SK-N-SH (cell line): ENCODE measurements at regions of chr14 and their contacts with region 1.

Region 1: GRCh38 chr14:72516936-72517700 is 376.8 kb downstream of the DPF3 start:
- DNase-seq: peak; percentile 48
- H3K4me3 ChIP-seq: no peak overlapping the region; a peak in 1 of 4 replicates
- H3K27ac ChIP-seq: no peak overlapping the region
- H3K4me1 ChIP-seq: peaks cover 0 to 7% of the 10 kb centered on the region in 2 experiments; a peak in 1 of 4 replicates
- H3K27me3 ChIP-seq: no peaks in the 10 kb centered on the region; the same call in 1 of the 2 replicates
- CTCF ChIP-seq: peak; percentile 92
- EP300 ChIP-seq: no peak
- RAD21 ChIP-seq: peak; percentile 98

Region 2: GRCh38 chr14:72495664-72496264 is 21.4 kb before region 1 on chr14:
- CTCF ChIA-PET with region 1: interaction called, 21 read pairs
- POLR2A ChIA-PET with region 1: no interaction called
- DNase-seq: no peak
- H3K4me3 ChIP-seq: no peak overlapping the region
- H3K27ac ChIP-seq: no peak overlapping the region
- H3K4me1 ChIP-seq: peaks cover 0 to 4% of the 10 kb centered on the region in 2 experiments; a peak in 2 of 4 replicates
- H3K27me3 ChIP-seq: peaks cover 13% of the 10 kb centered on the region; the same call in 1 of the 2 replicates
- CTCF ChIP-seq: no peak
- EP300 ChIP-seq: no peak
- RAD21 ChIP-seq: no peak

Region 3: GRCh38 chr14:72544619-72545387 is 27.7 kb after region 1 on chr14:
- CTCF ChIA-PET with region 1: interaction called, 25 read pairs
- POLR2A ChIA-PET with region 1: no interaction called
- DNase-seq: no peak
- H3K4me3 ChIP-seq: no peak overlapping the region
- H3K27ac ChIP-seq: no peak overlapping the region
- H3K4me1 ChIP-seq: peaks cover 0 to 9% of the 10 kb centered on the region in 2 experiments; a peak in 1 of 4 replicates
- H3K27me3 ChIP-seq: no peaks in the 10 kb centered on the region; the same call in 1 of the 2 replicates
- CTCF ChIP-seq: no peak
- EP300 ChIP-seq: no peak
- RAD21 ChIP-seq: no peak

Region 4: GRCh38 chr14:72736314-72736715 is 219.2 kb after region 1 on chr14:
- CTCF ChIA-PET with region 1: interaction called, 42 read pairs
- POLR2A ChIA-PET with region 1: no interaction called
- DNase-seq: peak; percentile 71
- H3K4me3 ChIP-seq: no peak overlapping the region; a peak in 1 of 4 replicates
- H3K27ac ChIP-seq: peak overlapping the region in 1 of 2 experiments; percentile 89; a peak in 2 of 4 replicates
- H3K4me1 ChIP-seq: peaks cover 23 to 54% of the 10 kb centered on the region in 2 experiments; a peak in 3 of 4 replicates
- H3K27me3 ChIP-seq: no peaks in the 10 kb centered on the region
- CTCF ChIP-seq: peak; percentile 28
- EP300 ChIP-seq: peak in 1 of 2 experiments; percentile 39; a peak in 1 of 4 replicates
- RAD21 ChIP-seq: peak; percentile 53

Region 5: DNA sequence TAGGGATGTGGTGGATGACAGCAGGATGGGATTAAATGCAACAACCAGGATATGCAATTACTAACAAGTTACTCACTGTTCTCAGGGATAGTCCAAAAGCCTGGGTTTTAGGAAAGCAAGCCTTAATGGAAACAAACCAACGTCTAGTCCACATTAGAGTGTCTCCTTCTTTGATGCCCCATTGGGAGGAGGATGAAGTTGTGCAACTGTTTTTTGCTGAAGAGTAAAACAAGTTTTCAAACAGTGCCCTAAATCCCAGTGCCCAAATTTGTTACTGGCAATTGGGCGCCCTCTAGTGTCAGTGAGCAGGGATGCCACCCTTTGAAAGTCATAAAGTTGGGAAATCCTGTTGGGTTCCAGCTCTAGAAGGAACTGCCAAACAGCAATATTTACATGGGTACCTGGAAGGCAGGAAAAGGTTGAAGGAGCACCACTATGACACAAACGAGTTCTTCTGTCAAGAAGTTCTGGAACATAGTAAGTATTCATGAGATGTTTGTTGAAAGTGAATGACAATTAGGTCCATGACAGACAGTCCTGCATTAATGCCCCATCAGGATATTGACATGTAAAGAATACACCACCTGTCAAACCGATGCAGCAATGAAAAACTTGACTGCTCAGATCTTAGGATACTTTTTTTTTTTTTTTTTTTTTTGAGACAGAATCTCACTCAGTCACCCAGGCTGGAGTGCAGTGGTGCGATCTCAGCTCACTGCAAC is 387.9 kb after region 1 on chr14:
- CTCF ChIA-PET with region 1: interaction called, 339 read pairs
- POLR2A ChIA-PET with region 1: no interaction called
- DNase-seq: peak; percentile 65
- H3K4me3 ChIP-seq: no peak overlapping the region; a peak in 1 of 4 replicates
- H3K27ac ChIP-seq: no peak overlapping the region
- H3K4me1 ChIP-seq: peaks cover 0 to 33% of the 10 kb centered on the region in 2 experiments; a peak in 1 of 4 replicates
- H3K27me3 ChIP-seq: no peaks in the 10 kb centered on the region
- CTCF ChIP-seq: peak; percentile 96
- EP300 ChIP-seq: no peak
- RAD21 ChIP-seq: peak; percentile 96

Region 6: DNA sequence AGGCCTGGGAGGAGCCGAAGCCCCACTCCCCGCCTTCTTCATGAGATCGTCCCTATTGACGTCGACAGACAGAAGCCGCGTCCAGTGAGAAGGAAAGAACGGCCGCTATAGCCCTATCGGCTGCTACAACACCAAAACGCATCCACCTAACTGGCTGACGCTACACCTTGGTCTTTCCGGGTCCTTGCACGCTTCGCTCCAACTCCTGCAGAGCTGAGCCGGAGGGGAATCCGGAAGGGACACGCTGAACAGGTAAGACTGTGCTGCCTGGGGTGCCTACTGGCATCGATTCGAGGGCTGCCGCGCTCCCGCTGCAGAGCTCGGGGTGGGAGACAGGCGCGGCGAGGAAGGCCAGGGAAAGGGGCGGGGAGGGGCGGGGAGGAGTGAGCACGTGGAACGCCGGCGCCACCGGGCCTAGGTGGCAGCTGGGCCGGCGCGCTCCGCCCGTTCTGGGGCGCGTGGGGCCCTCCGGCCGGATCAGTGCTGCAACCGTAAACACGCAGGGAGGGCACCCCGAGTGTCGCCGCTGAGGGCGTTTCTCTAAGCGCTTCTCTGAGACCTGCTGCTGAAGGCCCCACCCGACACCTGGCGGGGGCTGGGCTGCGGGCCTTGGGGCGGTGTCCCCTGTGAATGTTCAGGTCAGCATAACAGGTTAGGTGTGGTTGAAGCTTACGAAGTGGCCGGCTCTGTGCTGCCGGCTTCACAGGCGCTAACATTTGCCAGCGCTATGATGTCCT is 409.3 kb after region 1 on chr14 and contains the start of gene DCAF4:
- CTCF ChIA-PET with region 1: interaction called, 18 read pairs
- POLR2A ChIA-PET with region 1: no interaction called
- DNase-seq: peak; percentile 99
- H3K4me3 ChIP-seq: peak within 1 kb of the TSS; percentile 79 to 93
- H3K27ac ChIP-seq: peak within 1 kb of the TSS; percentile 12 to 50; a peak in 3 of 4 replicates
- H3K4me1 ChIP-seq: peaks cover 0 to 12% of the 10 kb centered on the region in 2 experiments; a peak in 1 of 4 replicates
- H3K27me3 ChIP-seq: no peaks in the 10 kb centered on the region
- CTCF ChIP-seq: no peak
- EP300 ChIP-seq: no peak
- RAD21 ChIP-seq: no peak
- polyA plus RNA-seq, gene DCAF4: 17.9 and 27.8 TPM in 2 replicates

Region 7: GRCh38 chr14:72948481-72949138 is 431.5 kb after region 1 on chr14:
- CTCF ChIA-PET with region 1: interaction called, 269 read pairs
- POLR2A ChIA-PET with region 1: interaction called, 3 read pairs
- DNase-seq: peak; percentile 70
- H3K4me3 ChIP-seq: peak overlapping the region in 1 of 2 experiments; percentile 33; a peak in 1 of 4 replicates
- H3K27ac ChIP-seq: no peak overlapping the region
- H3K4me1 ChIP-seq: no peaks in the 10 kb centered on the region
- H3K27me3 ChIP-seq: no peaks in the 10 kb centered on the region
- CTCF ChIP-seq: peak; percentile 94
- EP300 ChIP-seq: no peak
- RAD21 ChIP-seq: peak; percentile 74